Esophagus muscularis mucosa (tissue), 4 donors: ENCODE measurements at regions of chr3 and their contacts with region 1.

Region 1: GRCh38 chr3:57942872-57943283 is 65.3 kb upstream of the FLNB start:
- DNase-seq: no peak
- H3K4me3 ChIP-seq: no peak overlapping the region
- H3K27ac ChIP-seq: peak overlapping the region; percentile 56 to 81 (median 65)
- H3K4me1 ChIP-seq: peaks cover 34 to 51% (median 42%) of the 10 kb centered on the region in 4 donors
- H3K27me3 ChIP-seq: no peaks in the 10 kb centered on the region
- CTCF ChIP-seq: no peak
- EP300 ChIP-seq: no peak
- POLR2A ChIP-seq: no peak

Region 2: DNA sequence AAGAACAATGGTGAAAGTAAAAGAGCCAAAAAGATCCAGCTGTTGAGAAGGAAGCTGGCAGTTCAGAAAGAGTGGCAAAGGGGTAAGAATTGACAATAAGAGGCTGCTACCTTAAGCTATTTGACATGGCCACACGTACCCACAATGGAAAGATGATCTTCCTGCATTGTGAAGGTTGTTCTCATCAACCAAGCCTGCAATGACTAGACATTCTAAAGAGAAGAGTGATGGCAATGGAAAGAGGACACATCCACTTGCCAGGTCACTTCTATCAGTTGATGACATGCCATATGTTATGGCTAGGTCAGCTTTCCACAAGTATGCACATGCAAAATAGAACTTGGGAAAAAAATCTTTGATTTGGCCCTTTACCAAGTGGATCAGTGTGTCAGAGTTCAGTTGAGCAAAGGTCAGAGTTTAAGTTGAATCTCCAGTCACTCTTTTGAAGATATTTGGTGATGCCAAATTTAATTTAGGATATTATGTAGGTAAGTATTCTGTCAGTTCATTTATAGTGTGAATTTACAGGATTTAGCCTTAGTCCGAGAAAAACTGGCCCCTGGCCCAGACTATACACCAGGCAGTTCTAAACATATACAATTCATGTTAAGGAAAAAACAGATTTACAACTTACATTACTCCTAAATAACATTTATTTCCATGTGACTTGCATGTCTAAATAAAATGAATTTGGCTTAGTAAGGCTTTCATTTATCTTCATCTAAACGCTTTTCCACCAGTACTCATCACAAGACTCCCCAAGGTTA is 39.6 kb before region 1 on chr3:
- intact Hi-C with region 1: loop called (anchors 5 kb)
- DNase-seq: no peak
- H3K4me3 ChIP-seq: no peak overlapping the region
- H3K27ac ChIP-seq: peak overlapping the region; percentile 11 to 51 (median 34)
- H3K4me1 ChIP-seq: peaks cover 20 to 69% (median 55%) of the 10 kb centered on the region in 4 donors
- H3K27me3 ChIP-seq: no peaks in the 10 kb centered on the region
- CTCF ChIP-seq: no peak
- EP300 ChIP-seq: no peak
- POLR2A ChIP-seq: no peak